HEK293 (cell line): ENCODE measurements at regions of chr11 and their contacts with region 1.

Region 1: DNA sequence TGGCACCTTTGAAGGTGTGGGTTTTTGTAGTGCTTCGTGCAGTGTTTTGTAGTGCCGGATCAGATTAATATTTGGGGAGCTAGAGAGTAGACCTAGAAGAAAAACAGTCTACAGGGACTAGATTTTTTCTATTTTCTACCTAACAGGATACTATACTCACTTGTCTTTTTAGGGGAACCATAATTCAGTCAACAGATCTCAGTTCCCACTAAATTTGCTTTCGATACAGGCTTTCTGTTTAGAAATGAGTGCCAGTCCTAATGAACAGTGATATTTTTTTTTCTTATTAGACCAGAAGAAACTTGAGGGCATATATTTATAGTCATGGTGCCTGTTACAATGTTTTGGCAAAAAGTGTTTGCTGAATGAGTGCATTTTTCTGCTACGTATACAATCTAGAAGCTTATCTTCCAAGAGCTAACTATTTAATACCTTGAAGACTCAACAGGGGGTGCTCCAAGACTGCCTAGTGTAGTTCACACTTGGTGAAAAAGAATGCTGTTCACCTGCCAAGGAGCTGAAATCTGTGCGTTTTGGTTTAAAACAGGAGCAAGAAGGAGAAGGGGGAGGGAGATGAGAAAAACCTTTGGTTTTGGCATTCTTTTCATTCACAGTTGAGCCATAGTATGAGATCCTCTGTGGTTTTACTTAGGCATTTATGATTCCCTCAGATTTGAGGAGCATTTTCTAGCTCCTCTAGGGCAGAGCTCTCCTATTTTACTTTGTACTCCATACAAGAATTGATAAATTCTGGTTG is 44.9 kb upstream of the VSTM5 start:
- H3K4me3 ChIP-seq: no peak overlapping the region
- H3K27ac ChIP-seq: no peak overlapping the region
- H3K4me1 ChIP-seq: no peaks in the 10 kb centered on the region
- CTCF ChIP-seq: peak; percentile 50; the same call in 1 of the 2 replicates

Region 2: DNA sequence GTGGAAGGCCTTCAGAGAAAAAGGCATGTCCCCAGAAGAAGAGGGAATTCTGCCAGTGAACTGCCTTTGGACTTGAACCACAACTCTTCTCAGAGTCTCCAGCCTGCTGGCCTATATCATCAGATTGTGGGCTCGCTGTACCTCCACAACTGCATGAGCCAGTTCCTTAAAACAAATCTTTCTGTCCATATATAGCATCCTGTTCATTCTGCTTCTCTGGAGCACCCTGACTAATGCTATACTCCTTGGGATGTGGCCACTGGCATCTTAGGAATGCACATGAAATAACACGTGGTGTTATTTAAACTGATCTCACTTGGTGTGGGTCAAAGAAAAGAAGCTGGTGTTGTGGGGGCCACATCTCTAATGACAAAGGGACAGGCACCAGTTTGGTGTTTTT is 13.4 kb after region 1 on chr11:
- CTCF ChIA-PET with region 1: interaction called, 32 read pairs
- POLR2A ChIA-PET with region 1: no interaction called
- H3K4me3 ChIP-seq: no peak overlapping the region
- H3K27ac ChIP-seq: no peak overlapping the region
- H3K4me1 ChIP-seq: no peaks in the 10 kb centered on the region
- CTCF ChIP-seq: no peak

Region 3: DNA sequence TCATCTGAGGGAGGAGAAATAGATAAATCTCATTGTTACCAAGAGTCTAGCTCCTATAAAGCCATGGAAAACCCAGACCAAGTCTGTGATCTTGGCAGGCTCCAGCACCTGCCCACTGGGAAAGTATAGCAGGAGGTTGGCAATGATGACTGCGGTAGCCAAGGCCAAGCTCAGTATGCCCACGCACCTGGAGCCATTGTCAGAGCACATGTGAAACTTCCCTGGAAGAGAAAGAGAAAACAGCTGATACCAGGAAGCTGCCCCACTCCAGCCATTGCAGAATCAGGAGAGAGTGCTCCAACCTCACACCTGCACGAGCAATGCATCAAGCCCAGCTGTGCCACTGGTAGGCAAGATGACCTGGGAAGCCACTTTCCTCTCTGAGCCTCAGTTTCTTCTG is 63.7 kb after region 1 on chr11:
- CTCF ChIA-PET with region 1: no interaction called
- POLR2A ChIA-PET with region 1: no interaction called
- H3K4me3 ChIP-seq: no peak overlapping the region
- H3K27ac ChIP-seq: no peak overlapping the region
- H3K4me1 ChIP-seq: no peaks in the 10 kb centered on the region
- CTCF ChIP-seq: no peak

Region 4: DNA sequence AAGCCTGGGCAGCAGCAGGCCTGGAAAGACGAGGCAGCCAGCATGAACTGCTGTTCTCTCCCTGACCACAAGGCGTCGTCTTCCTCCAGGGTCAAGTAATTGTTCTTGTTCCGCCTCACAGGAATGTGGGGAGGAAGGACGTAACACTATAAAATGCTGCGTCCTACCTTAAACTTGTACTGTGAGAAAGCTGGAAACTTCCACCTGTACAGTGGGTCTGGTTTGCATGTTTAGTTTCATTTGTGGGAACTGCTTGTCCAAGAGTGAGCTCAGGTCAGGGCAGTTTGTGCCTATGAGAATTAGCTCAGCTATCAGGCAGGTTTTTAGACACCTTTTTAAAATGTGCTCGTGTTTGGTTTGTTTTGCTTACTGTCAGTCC is 288.6 kb after region 1 on chr11:
- CTCF ChIA-PET with region 1: interaction called, 23 read pairs
- POLR2A ChIA-PET with region 1: no interaction called
- H3K4me3 ChIP-seq: no peak overlapping the region
- H3K27ac ChIP-seq: no peak overlapping the region
- H3K4me1 ChIP-seq: no peaks in the 10 kb centered on the region
- CTCF ChIP-seq: peak; percentile 33; the same call in 1 of the 2 replicates

Region 5: GRCh38 chr11:94504689-94505293 is 609.5 kb after region 1 on chr11:
- CTCF ChIA-PET with region 1: interaction called, 33 read pairs
- POLR2A ChIA-PET with region 1: no interaction called
- H3K4me3 ChIP-seq: no peak overlapping the region
- H3K27ac ChIP-seq: no peak overlapping the region
- H3K4me1 ChIP-seq: no peaks in the 10 kb centered on the region
- CTCF ChIP-seq: no peak

Region 6: DNA sequence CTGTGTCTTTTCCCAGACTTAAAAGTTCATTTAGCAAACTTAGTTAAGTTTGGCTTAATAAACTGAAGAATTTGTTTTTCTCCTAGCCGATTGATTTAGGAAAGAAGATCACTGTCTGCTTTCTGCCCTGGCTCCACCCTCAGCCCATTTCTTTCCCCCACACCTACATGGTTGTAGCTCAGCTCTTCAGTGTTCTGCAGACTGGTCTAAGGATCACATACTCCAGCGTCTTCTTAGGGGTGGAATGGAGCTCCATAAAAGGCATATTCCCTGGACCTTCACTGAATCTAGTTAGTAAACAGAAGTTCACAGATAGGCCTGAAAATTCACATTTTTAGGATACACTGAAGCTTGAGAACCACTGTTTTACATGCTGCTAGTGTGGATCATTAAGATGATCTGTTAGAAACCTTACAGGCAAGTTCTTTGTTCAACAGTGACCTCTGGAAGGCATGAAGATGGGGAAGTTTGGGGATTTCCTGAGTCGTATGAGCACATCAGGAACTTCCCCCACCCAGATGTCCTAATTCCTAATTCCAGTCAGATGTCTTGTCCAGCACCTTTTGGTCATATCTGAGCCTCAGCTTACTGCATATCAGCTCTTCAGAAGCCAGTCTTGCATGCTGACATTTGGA is 688.7 kb after region 1 on chr11:
- CTCF ChIA-PET with region 1: no interaction called
- POLR2A ChIA-PET with region 1: no interaction called
- H3K4me3 ChIP-seq: no peak overlapping the region
- H3K27ac ChIP-seq: no peak overlapping the region
- H3K4me1 ChIP-seq: no peaks in the 10 kb centered on the region
- CTCF ChIP-seq: no peak